ENCODE measurements at regions of chr11 and their contacts with region 1.

Region 1: DNA sequence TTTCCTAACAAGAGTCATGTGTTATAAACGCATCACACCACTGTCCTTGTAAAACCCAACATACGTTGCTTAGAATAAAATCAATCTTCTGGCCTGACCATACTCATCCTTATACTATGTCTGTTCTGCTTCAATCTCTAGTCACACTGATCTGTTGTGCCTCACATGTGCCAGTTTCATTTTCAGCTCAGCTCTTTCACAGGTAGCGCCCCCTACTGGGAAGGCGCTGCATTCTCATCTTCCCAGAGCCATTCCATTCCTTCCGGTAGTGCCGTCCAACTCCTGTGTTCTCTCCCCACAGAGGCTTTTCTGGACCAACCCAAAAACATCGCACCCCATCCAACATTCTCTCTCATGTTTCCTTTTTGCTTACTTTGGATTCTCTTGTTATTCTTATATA is 22.2 kb downstream of the CASP5 start:
- DNase-seq: no peak
- ATAC-seq: peak; percentile 64
- H3K4me3 Mint-ChIP-seq: no peak overlapping the region
- H3K27ac Mint-ChIP-seq: no peak overlapping the region
- H3K4me1 Mint-ChIP-seq: peaks cover 5% of the 10 kb centered on the region
- H3K27me3 Mint-ChIP-seq: no peaks in the 10 kb centered on the region
- CTCF ChIP-seq: peak; percentile 31

Region 2: GRCh38 chr11:103682318-103683184 is 1318.2 kb before region 1 on chr11:
- CTCF ChIA-PET with region 1: interaction called, 4 read pairs
- POLR2A ChIA-PET with region 1: no interaction called
- intact Hi-C with region 1: loop called (anchors 2 kb)
- DNase-seq: peak; percentile 21
- ATAC-seq: peak; percentile 75
- H3K4me3 Mint-ChIP-seq: no peak overlapping the region
- H3K27ac Mint-ChIP-seq: no peak overlapping the region
- H3K4me1 Mint-ChIP-seq: peaks cover 5% of the 10 kb centered on the region
- H3K27me3 Mint-ChIP-seq: no peaks in the 10 kb centered on the region
- CTCF ChIP-seq: no peak

Region 3: GRCh38 chr11:104609311-104610085 is 391.3 kb before region 1 on chr11:
- CTCF ChIA-PET with region 1: interaction called, 8 read pairs
- POLR2A ChIA-PET with region 1: no interaction called
- intact Hi-C with region 1: loop called (anchors 1 kb)
- DNase-seq: no peak
- ATAC-seq: peak; percentile 77
- H3K4me3 Mint-ChIP-seq: no peak overlapping the region
- H3K27ac Mint-ChIP-seq: no peak overlapping the region
- H3K4me1 Mint-ChIP-seq: no peaks in the 10 kb centered on the region
- H3K27me3 Mint-ChIP-seq: peaks cover 2% of the 10 kb centered on the region
- CTCF ChIP-seq: no peak

Region 4: DNA sequence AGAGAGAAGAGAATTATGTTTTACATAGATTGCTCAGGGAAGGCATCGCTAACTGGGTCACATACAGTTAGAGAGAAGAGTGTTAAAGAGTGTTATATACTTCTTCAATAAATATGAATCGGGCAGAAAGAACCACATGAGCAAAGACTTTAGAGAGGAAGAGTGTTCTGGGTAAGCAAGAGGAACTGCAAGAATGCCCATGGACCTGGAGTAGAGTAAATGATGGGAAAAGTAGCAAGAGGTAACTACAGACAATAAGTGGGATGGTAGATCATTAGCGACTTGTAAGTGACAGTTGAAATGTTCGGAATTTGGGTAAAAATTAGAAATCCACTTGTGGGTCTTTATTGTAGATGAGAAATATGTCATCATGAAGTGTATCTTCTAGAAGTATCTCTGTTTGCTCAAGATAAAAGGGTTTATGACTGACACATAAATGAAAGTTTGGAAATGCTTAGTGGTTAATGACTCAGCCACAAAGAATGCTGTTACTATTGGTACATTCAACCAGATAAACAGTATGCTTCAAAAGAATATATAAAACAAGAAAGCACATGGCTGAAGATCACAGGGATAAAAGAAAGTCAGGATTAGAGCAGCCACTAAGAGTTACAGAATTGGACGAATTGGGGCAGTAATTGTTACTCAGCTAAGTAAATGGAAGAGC is 331.9 kb before region 1 on chr11:
- CTCF ChIA-PET with region 1: no interaction called
- POLR2A ChIA-PET with region 1: no interaction called
- intact Hi-C with region 1: no loop called
- DNase-seq: no peak
- ATAC-seq: no peak
- H3K4me3 Mint-ChIP-seq: no peak overlapping the region
- H3K27ac Mint-ChIP-seq: no peak overlapping the region
- H3K4me1 Mint-ChIP-seq: no peaks in the 10 kb centered on the region
- H3K27me3 Mint-ChIP-seq: peaks cover 10% of the 10 kb centered on the region
- CTCF ChIP-seq: no peak

Region 5: GRCh38 chr11:104799251-104799650 is 201.5 kb before region 1 on chr11:
- CTCF ChIA-PET with region 1: no interaction called
- POLR2A ChIA-PET with region 1: no interaction called
- intact Hi-C with region 1: loop called (anchors 1 kb)
- DNase-seq: no peak
- ATAC-seq: peak; percentile 57
- H3K4me3 Mint-ChIP-seq: peak overlapping the region; percentile 74
- H3K27ac Mint-ChIP-seq: peak overlapping the region; percentile 91
- H3K4me1 Mint-ChIP-seq: peaks cover 30% of the 10 kb centered on the region
- H3K27me3 Mint-ChIP-seq: no peaks in the 10 kb centered on the region
- CTCF ChIP-seq: no peak

Region 6: DNA sequence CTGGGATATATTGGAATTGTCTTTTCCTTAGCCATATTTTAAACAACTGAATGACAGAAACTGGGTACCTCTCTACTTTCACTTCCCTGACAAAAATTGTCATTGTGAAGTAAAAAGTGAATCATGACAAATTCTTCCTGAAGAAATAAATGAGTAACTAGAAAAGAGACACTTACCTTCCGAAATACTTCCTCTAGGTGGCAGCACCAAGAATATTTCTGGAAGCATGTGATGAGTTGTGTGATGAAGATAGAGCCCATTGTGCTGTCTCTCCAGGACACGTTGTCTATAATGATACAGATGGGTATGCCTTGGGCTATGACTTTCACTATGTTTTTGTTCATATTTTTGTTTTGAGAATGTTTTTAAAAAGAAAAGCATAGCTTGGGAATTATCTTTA is 53.9 kb before region 1 on chr11:
- CTCF ChIA-PET with region 1: no interaction called
- POLR2A ChIA-PET with region 1: no interaction called
- intact Hi-C with region 1: loop called (anchors 2 kb)
- DNase-seq: no peak
- ATAC-seq: peak; percentile 66
- H3K4me3 Mint-ChIP-seq: no peak overlapping the region
- H3K27ac Mint-ChIP-seq: no peak overlapping the region
- H3K4me1 Mint-ChIP-seq: peaks cover 7% of the 10 kb centered on the region
- H3K27me3 Mint-ChIP-seq: no peaks in the 10 kb centered on the region
- CTCF ChIP-seq: peak; percentile 59

Region 7: GRCh38 chr11:105044921-105045524 is 44.2 kb after region 1 on chr11 and contains the start of gene CARD16:
- CTCF ChIA-PET with region 1: no interaction called
- POLR2A ChIA-PET with region 1: no interaction called
- intact Hi-C with region 1: no loop called
- DNase-seq: no peak
- ATAC-seq: peak; percentile 94
- H3K4me3 Mint-ChIP-seq: peak within 1 kb of the TSS; percentile 94
- H3K27ac Mint-ChIP-seq: peak within 1 kb of the TSS; percentile 95
- H3K4me1 Mint-ChIP-seq: peaks cover 49% of the 10 kb centered on the region
- H3K27me3 Mint-ChIP-seq: no peaks in the 10 kb centered on the region
- CTCF ChIP-seq: no peak
- total RNA-seq, gene CARD16: 31.5 and 33.1 TPM in 2 replicates